Adrenal gland (tissue), 19 donors: ENCODE measurements at regions of chr2 and their contacts with region 1.

Region 1: GRCh38 chr2:229714736-229715541 is 584 bp upstream of the DNER start:
- DNase-seq: peak; percentile 75 to 91 (median 84)
- H3K4me3 ChIP-seq: peak overlapping the region in 2 of 4 donors; percentile 34 to 73
- H3K27ac ChIP-seq: peak overlapping the region; percentile 60 to 93 (median 81)
- H3K4me1 ChIP-seq: peaks cover 0 to 34% of the 10 kb centered on the region in 2 donors
- H3K27me3 ChIP-seq: peaks cover 3% of the 10 kb centered on the region
- CTCF ChIP-seq: peak in 1 of 6 experiments; percentile 23
- POLR2A ChIP-seq: peak in 1 of 2 donors; percentile 73

Region 2: DNA sequence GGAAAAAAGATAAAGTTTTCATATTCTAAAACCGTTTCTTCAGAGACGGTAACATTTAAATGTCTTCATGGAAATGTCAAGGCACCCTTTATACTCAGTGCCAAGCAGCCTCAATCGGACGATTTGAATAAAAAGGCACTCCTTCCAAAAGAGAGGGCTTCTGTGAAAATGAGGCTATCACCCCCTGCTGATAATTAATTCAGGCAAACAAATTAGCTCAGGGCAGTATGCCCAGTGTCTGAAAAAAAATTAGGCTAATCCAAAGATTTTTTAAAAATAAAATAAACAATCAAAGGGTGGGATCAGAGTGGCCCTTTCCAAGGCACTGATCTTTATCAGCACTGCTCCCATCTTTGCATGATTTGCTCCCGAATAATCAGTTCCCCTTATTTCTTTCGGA is 292.9 kb before region 1 on chr2:
- intact Hi-C with region 1: loop called in 1 of 2 experiments (anchors 10 kb)
- DNase-seq: no peak
- H3K4me3 ChIP-seq: no peak overlapping the region
- H3K27ac ChIP-seq: no peak overlapping the region
- H3K4me1 ChIP-seq: peaks cover 10 to 19% of the 10 kb centered on the region in 2 donors
- H3K27me3 ChIP-seq: no peaks in the 10 kb centered on the region
- CTCF ChIP-seq: no peak
- POLR2A ChIP-seq: no peak

Region 3: DNA sequence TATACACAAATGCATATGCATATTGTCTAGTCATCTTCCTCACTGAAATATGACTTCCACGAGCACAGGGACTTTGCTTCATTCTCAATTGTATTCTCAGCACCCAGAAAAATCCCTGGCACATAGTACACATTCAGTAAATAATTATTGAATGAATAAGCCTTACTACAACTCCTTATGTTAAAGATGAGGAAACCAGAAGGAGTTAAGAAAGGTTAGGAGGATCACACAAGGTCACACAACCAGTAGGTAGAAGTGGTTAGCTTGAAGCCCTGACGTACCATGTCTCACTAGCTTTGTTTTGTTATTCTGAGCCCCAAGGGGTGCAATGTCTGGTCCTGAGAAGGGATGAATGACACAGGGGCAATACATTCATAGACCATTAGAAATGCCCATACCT is 222.9 kb before region 1 on chr2:
- intact Hi-C with region 1: no loop called
- DNase-seq: no peak
- H3K4me3 ChIP-seq: no peak overlapping the region
- H3K27ac ChIP-seq: no peak overlapping the region
- H3K4me1 ChIP-seq: no peaks in the 10 kb centered on the region
- H3K27me3 ChIP-seq: no peaks in the 10 kb centered on the region
- CTCF ChIP-seq: no peak
- POLR2A ChIP-seq: no peak

Region 4: GRCh38 chr2:229598227-229598626 is 116.7 kb before region 1 on chr2:
- intact Hi-C with region 1: loop called in 1 of 2 experiments (anchors 5 kb)
- DNase-seq: no peak
- H3K4me3 ChIP-seq: no peak overlapping the region
- H3K27ac ChIP-seq: no peak overlapping the region
- H3K4me1 ChIP-seq: peaks cover 7 to 21% of the 10 kb centered on the region in 2 donors
- H3K27me3 ChIP-seq: no peaks in the 10 kb centered on the region
- CTCF ChIP-seq: no peak
- POLR2A ChIP-seq: no peak